ENCODE measurements at regions of chr11 and their contacts with region 1.

Region 1: DNA sequence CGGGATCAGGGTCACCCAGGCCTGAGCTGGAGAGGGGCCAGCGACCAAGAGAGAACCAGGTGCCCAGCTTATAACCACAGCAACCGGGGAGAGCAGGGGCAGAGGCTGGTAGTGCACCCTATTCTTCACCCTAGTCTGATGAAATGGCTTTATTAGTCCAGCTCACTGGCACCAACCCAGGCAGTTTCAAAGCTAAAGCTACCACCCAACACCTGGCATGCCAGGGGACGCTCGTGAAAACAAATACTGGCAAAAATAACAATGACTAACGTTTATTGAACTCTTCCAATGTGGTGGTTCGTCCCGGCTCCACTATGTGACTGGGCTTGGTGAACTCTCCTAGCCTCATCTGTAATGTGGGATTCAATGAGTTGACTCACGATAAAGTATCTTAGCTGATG is 30.6 kb downstream of the SCGB1A1 start:
- DNase-seq: no peak
- CTCF ChIP-seq: no peak

Region 2: GRCh38 chr11:62421996-62422395 is 27.5 kb before region 1 on chr11:
- CTCF ChIA-PET with region 1: interaction called, 17 read pairs
- POLR2A ChIA-PET with region 1: no interaction called
- DNase-seq: no peak
- CTCF ChIP-seq: no peak

Region 3: DNA sequence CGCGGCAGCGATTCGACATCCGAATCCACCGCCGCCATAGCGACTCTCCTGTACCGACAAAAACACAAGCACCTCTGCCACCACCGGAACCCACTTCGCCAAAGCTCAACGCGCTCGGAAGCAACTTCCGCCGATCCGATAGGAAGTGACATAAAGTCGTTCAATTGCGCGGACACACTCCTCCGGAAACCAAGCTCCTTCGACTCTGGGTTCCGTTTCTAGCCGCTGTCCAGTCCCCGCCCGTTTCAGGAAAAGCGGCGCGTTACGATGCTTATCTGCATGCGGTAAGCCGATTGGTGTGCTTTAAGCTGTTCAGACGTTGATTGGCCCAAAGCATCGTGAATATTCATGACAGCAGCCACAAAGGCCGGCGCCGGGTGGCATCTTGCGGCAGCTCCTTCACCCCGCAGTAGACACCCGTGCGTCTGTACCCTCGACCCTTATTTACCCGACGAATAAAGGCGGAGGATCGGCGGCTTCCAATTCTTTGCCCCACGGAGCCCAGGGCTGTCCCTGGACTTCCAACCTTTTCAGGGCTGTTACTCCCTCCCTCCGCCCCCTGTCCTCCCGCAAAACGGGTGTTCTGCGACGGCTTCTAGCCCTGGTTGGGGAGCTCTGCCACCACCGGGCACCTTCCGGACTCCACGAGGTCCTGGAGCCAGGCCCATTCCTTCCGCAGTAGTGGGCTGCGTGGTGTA is 142.1 kb after region 1 on chr11 and contains the start of gene TUT1:
- CTCF ChIA-PET with region 1: no interaction called
- POLR2A ChIA-PET with region 1: no interaction called
- DNase-seq: peak; percentile 91
- CTCF ChIP-seq: no peak